ENCODE measurements at regions of chr17 and their contacts with region 1.

Region 1: DNA sequence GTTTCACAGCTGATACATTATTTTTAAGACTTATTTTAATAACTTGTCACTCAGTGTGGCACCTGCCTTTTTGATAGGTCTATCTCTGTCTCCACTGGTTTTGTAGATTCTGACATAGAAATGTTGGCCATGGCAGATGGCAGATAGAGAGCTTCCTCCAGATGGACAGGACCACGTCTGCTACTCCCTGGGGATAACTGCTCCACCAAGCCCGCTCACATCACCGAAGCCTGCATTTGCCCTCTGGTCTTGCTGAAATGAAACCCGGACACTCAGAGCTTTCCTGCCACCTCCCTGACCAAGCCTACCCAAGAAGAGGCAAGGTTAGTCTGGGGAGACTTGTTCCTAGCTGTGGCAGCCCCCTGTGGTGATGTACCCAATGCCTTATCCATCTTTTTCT is 16.4 kb upstream of the HAP1 start:
- DNase-seq: no peak
- CTCF ChIP-seq: no peak

Region 2: DNA sequence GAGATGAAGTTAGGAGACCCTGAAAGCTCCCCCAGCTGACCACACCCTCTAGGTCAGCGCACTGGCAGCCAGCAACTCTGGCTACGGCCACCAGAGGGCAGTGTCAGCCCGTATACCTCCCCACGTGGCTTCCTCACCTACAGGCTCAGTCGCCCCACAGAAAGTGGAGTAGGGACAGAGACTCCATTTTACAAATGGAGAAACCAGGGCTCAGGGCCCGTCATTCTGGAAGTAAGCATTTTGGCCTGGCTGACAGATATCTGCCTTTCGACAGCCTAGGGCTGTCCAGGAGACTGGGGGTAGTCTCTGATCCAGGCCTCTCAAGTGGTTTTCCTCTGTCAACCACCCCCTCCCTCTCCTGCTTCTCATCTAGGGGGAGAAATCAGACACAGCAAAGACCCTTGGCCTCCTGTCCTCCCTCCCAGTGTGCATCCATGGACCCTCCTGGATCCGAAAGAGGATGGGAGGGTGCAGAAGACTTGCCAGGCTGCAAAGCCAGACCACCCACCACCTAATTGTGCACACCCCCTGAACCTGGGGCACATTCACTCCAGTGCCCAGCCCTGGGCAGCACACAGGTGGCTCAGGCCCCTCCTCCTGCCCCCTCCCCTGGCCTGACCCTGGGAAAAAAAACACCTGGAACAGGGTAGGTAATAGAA is 12.7 kb before region 1 on chr17:
- CTCF ChIA-PET with region 1: interaction called, 10 read pairs
- POLR2A ChIA-PET with region 1: no interaction called
- DNase-seq: peak; percentile 93
- CTCF ChIP-seq: peak; percentile 99

Measured in GM10248 (cell line).